Calu3 (cell line): ENCODE measurements at regions of chr1 and their contacts with region 1.

Region 1: DNA sequence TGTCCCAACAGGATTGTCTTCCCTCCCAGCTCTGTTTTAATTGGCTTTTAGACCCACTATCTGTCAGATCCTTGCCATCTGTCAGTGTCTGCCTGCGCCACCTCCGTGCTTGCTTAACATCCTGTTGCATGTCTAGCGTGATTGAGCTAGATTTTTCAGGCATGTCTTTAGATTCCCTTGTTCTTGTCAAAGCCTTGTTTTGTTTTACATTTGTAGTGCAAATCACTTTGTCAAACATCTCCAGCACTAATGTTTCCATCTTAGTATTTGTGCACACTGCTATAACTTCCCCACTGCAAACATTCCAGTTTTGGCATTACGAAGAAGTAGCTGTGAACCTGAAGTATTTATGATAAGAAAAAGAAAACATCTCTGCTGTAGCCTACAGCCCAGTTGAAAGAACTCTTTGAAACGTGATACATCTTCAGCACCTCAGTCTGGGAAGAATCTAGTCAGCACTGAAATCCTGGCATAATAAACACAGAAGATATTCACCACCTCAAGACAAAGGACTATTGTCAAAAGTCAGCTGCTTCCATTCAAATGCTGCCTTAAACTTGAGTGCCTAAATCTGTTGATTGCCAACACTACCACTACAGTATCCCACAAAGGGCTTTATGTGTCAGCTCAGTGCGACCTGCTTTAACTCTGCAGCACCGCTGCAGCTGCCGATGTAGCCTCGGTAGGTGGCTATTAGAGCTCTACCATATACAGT is 105.0 kb downstream of the FNBP1L start:
- DNase-seq: peak; percentile 36
- H3K4me3 Mint-ChIP-seq: peak overlapping the region; percentile 42
- H3K27ac Mint-ChIP-seq: peak overlapping the region; percentile 68
- H3K4me1 Mint-ChIP-seq: peaks cover 58% of the 10 kb centered on the region
- H3K27me3 Mint-ChIP-seq: no peaks in the 10 kb centered on the region
- CTCF ChIP-seq: no peak

Region 2: GRCh38 chr1:93384656-93385055 is 168.2 kb before region 1 on chr1:
- CTCF ChIA-PET with region 1: no interaction called
- intact Hi-C with region 1: no loop called
- DNase-seq: no peak
- H3K4me3 Mint-ChIP-seq: no peak overlapping the region
- H3K27ac Mint-ChIP-seq: no peak overlapping the region
- H3K4me1 Mint-ChIP-seq: no peaks in the 10 kb centered on the region
- H3K27me3 Mint-ChIP-seq: no peaks in the 10 kb centered on the region
- CTCF ChIP-seq: no peak

Region 3: DNA sequence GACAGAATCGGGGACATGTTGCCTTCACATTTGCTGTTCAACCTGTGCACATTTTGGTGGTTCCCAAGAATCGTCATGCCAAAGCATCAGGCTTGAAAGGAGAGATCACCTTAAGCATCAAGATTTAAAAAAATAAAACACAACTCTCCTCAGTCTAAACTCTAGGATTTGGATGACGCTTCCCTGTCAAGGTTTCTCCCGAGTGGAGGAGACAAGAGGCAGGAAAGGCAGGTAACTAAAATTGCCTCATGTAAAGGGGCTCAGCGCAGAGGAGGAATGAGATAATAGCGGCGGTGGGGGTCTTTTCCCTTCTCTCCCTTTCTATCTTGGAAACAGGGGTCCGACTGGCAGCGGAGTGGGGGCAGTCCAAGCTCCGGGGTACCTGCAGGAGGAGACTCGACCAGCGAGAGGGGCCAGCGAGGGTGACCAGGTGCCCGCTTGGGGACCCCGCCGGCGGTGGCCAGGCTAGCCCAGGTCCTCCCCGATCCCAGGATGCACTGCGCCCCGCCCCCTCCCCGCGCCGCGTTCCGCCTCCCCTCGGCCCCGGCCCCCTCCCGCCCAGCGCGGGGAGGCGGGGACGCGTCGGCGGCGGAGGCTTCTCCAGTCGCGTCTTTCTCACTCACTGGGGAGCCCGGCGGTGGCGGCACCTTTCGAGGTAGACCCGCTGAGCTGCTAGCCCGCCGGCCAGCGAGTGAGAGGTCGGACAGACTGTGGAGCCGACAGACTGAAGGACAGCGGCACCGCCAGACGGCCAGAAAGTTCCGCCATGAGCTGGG is 105.2 kb before region 1 on chr1 and contains the start of gene FNBP1L:
- CTCF ChIA-PET with region 1: interaction called, 3 read pairs
- intact Hi-C with region 1: loop called (anchors 2 kb)
- DNase-seq: peak; percentile 89
- H3K4me3 Mint-ChIP-seq: peak within 1 kb of the TSS; percentile 98
- H3K27ac Mint-ChIP-seq: peak within 1 kb of the TSS; percentile 91
- H3K4me1 Mint-ChIP-seq: peaks cover 44% of the 10 kb centered on the region
- H3K27me3 Mint-ChIP-seq: no peaks in the 10 kb centered on the region
- CTCF ChIP-seq: no peak
- total RNA-seq, gene FNBP1L: 63.4 and 72.7 TPM in 2 replicates

Region 4: GRCh38 chr1:93493746-93494145 is 59.2 kb before region 1 on chr1:
- CTCF ChIA-PET with region 1: no interaction called
- intact Hi-C with region 1: no loop called
- DNase-seq: no peak
- H3K4me3 Mint-ChIP-seq: no peak overlapping the region
- H3K27ac Mint-ChIP-seq: no peak overlapping the region
- H3K4me1 Mint-ChIP-seq: peaks cover 46% of the 10 kb centered on the region
- H3K27me3 Mint-ChIP-seq: no peaks in the 10 kb centered on the region
- CTCF ChIP-seq: no peak

Region 5: GRCh38 chr1:93591676-93592550 is 39.0 kb after region 1 on chr1:
- CTCF ChIA-PET with region 1: interaction called, 10 read pairs
- intact Hi-C with region 1: loop called (anchors 5 kb)
- DNase-seq: peak; percentile 93
- H3K4me3 Mint-ChIP-seq: peak overlapping the region; percentile 70
- H3K27ac Mint-ChIP-seq: peak overlapping the region; percentile 96
- H3K4me1 Mint-ChIP-seq: peaks cover 80% of the 10 kb centered on the region
- H3K27me3 Mint-ChIP-seq: no peaks in the 10 kb centered on the region
- CTCF ChIP-seq: no peak